Calu3 (cell line): ENCODE measurements at regions of chr1 and their contacts with region 1.

Region 1: DNA sequence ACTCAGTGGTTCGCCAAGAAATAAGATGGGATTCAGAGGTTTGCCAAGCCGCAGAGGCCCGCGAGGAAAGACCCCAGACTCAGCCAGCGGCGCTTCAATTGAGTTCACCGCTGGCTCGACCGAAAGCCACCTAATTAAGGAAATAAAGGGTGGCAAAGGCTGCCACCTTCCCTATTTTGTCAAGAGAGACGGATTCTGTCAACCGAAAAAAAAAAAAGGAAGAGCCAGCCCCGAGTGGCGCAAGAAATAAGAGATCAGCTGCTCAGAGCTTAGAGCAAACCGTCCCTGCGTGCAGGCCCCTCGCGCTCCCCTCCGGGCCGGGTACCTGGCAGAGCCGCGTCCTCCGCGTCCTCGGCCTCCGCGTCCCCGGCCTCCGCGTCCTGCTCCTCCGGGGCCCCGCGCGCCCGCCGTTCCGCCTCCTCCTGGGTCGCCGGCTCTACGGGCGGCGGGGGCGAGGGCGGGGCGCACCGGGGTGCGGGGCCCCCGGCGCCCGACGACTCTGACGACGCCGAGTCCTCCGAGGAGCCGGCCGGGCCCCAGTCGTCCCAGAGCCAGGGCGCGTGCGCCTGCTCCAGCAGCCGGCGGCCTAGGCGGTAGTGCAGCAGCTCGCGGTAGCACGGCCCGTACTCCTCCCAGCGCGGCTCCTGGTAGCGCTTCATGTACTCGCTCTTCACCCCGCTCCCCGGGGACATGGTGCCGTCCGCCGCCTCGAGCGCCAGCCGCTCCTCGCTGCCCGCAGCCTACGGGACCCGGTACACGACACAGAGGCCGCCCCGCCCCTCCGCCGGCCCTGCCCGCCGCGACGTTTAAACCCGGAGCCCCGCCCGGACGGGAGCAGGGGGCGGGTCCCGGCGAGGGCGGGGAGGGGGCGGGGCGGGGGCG is 832 bp downstream of the CCSAP start:
- DNase-seq: peak; percentile 92
- H3K4me3 Mint-ChIP-seq: peak overlapping the region; percentile 83
- H3K27ac Mint-ChIP-seq: peak overlapping the region; percentile 51
- H3K4me1 Mint-ChIP-seq: peaks cover 24% of the 10 kb centered on the region
- H3K27me3 Mint-ChIP-seq: peaks cover 38% of the 10 kb centered on the region
- CTCF ChIP-seq: no peak

Region 2: GRCh38 chr1:229271448-229272159 is 70.4 kb before region 1 on chr1:
- CTCF ChIA-PET with region 1: no interaction called
- intact Hi-C with region 1: loop called (anchors 2 kb)
- DNase-seq: no peak
- H3K4me3 Mint-ChIP-seq: peak overlapping the region; percentile 88
- H3K27ac Mint-ChIP-seq: peak overlapping the region; percentile 87
- H3K4me1 Mint-ChIP-seq: peaks cover 29% of the 10 kb centered on the region
- H3K27me3 Mint-ChIP-seq: no peaks in the 10 kb centered on the region
- CTCF ChIP-seq: no peak

Region 3: DNA sequence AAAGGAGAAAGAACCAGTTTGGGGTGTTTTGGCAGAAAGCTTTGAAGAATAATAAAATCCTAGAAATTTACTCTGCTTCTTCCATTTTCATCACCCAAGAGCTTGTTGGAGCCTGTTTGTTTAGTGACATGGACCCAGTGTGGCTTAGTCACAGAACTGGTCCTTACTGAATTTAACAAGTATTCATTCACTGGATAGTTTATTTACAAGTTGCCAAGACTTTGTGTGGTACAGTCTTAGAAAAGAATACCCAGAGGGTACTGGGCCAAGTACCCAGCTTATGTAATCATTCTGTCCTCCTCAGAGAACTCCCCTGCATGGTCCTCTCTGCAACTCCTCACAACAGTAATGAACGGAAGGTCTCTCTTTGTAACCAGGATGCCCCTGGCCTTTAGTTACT is 54.7 kb before region 1 on chr1:
- CTCF ChIA-PET with region 1: no interaction called
- intact Hi-C with region 1: no loop called
- DNase-seq: no peak
- H3K4me3 Mint-ChIP-seq: no peak overlapping the region
- H3K27ac Mint-ChIP-seq: no peak overlapping the region
- H3K4me1 Mint-ChIP-seq: peaks cover 25% of the 10 kb centered on the region
- H3K27me3 Mint-ChIP-seq: no peaks in the 10 kb centered on the region
- CTCF ChIP-seq: no peak